ENCODE measurements at regions of chr19 and their contacts with region 1.

Region 1: GRCh38 chr19:46748325-46749109 is 2.3 kb upstream of the STRN4 start:
- DNase-seq: peak; percentile 87
- H3K4me3 Mint-ChIP-seq: peak overlapping the region; percentile 51
- H3K27ac Mint-ChIP-seq: peak overlapping the region; percentile 28
- H3K4me1 Mint-ChIP-seq: peaks cover 42% of the 10 kb centered on the region
- H3K27me3 Mint-ChIP-seq: no peaks in the 10 kb centered on the region

Region 2: DNA sequence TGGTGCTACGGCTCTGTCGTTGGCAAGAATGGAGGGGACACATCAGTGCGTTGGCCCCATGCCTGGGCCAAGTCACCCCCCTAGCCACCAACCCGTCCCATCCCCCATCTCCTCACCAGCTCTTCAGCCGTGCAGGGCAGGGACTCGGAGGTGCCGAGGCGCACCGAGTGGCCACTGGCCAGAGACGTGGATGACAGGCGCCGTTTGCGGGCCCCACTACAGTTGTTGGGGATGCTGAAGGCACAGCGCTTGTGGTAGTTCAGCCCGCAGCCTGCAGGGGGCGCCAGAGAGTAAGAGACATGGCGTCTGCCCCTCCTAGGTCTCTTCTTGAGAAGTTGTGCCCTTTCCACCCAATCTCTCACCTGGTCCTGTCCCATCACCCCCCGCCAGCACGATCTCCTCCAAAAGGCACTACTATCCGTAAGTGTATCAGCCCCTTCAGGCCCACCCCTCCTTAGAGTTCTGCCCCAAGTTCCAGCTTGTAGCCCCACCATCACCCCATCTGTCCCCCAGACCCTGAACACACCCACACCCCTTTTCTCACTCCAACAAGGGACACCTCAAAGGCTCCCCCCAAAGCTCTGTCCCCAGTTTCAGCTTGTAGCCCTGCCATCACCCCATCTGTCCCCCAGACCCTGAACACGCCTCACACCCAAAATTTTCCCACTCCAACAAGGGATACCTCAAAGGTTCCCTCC is 44.0 kb before region 1 on chr19:
- CTCF ChIA-PET with region 1: interaction called, 16 read pairs
- DNase-seq: peak; percentile 91
- H3K4me3 Mint-ChIP-seq: no peak overlapping the region
- H3K27ac Mint-ChIP-seq: peak overlapping the region; percentile 81
- H3K4me1 Mint-ChIP-seq: peaks cover 16% of the 10 kb centered on the region
- H3K27me3 Mint-ChIP-seq: no peaks in the 10 kb centered on the region

Region 3: GRCh38 chr19:46759817-46760333 is 11.4 kb after region 1 on chr19:
- CTCF ChIA-PET with region 1: interaction called, 12 read pairs
- DNase-seq: no peak
- H3K4me3 Mint-ChIP-seq: no peak overlapping the region
- H3K27ac Mint-ChIP-seq: no peak overlapping the region
- H3K4me1 Mint-ChIP-seq: peaks cover 3% of the 10 kb centered on the region
- H3K27me3 Mint-ChIP-seq: no peaks in the 10 kb centered on the region

Region 4: GRCh38 chr19:46932346-46932745 is 183.8 kb after region 1 on chr19:
- CTCF ChIA-PET with region 1: no interaction called
- DNase-seq: no peak
- H3K4me3 Mint-ChIP-seq: no peak overlapping the region
- H3K27ac Mint-ChIP-seq: no peak overlapping the region
- H3K4me1 Mint-ChIP-seq: peaks cover 46% of the 10 kb centered on the region
- H3K27me3 Mint-ChIP-seq: no peaks in the 10 kb centered on the region